Posterior cingulate gyrus (tissue), 11 donors: ENCODE measurements at regions of chr3 and their contacts with region 1.

Region 1: GRCh38 chr3:105366326-105367062 is at the start of gene ALCAM:
- DNase-seq: peak; percentile 93 to 99 (median 96)

Region 2: GRCh38 chr3:104102386-104102785 is 1264.1 kb before region 1 on chr3:
- intact Hi-C with region 1: loop called (anchors 10 kb)
- DNase-seq: no peak

Region 3: DNA sequence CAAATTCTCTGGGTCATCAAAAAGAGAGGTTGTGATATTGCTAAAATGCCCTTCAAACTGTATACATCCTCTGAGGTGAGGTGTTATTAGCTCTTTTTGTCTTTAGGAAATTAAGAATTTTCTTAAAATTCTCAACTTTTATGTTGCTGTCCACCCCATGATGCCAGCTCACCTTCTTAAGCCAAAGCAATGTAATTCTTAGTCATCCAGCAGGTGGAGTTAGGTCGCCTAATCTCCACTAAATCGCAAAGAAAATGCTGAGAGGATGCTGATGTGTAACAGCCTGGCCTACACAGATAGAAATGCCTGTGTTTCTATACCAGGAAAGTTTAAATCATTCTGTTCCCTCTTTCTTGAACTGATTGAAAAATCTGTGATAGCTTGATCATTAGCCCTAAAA is 769.9 kb before region 1 on chr3:
- intact Hi-C with region 1: loop called (anchors 2 kb)
- DNase-seq: no peak

Region 4: DNA sequence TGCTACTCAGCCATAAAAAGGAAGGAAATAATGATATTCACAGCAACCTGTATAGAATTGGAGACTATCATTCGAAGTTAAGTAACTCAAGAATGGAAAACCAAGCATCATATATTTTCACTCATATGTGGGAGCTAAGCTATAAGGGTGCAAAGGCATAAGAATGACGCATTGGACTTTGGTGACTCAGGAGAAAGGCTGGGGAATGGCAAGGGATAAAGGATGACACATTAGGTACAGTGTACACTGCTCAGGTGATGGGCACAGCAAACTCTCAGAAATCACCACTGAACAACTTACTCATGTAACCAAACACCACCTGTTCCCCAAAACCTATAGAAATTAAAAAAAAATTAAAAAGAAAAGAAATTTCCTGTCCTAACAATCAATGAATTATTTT is 42.9 kb after region 1 on chr3:
- intact Hi-C with region 1: no loop called
- DNase-seq: no peak

Region 5: DNA sequence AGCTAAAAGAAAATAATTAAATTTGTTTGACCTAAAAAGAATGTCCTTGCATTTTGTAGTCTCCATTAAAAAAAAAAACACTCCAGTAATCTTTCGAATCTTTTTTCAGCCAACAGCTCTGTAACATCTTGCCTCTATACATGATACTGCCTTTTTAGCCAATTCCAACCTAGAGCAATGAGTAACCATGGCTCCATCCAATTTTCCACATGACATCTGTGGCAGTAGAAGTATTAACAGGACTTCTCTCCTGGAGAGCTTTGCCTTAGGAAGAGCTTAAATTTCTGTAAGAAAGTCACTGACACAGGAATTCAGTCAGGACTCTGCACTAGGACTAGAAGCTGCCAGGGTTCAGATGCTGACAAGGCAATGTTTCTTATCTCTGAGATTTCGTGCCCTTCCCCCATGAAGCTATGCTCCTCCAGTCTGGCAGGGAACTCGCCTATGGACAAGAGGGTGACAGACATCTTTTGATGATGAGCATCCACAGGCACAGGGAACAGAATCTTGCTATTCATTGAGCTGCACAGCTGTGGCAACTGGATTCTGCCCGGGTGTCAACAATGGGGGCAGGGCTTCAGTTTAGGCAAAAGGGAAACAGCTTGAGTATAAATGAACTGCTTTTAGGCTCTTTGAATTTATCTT is 82.0 kb after region 1 on chr3:
- intact Hi-C with region 1: loop called (anchors 1 kb)
- DNase-seq: peak; percentile 52 to 96 (median 80)

Region 6: GRCh38 chr3:105722943-105723556 is 356.6 kb after region 1 on chr3:
- intact Hi-C with region 1: no loop called
- DNase-seq: no peak

Region 7: DNA sequence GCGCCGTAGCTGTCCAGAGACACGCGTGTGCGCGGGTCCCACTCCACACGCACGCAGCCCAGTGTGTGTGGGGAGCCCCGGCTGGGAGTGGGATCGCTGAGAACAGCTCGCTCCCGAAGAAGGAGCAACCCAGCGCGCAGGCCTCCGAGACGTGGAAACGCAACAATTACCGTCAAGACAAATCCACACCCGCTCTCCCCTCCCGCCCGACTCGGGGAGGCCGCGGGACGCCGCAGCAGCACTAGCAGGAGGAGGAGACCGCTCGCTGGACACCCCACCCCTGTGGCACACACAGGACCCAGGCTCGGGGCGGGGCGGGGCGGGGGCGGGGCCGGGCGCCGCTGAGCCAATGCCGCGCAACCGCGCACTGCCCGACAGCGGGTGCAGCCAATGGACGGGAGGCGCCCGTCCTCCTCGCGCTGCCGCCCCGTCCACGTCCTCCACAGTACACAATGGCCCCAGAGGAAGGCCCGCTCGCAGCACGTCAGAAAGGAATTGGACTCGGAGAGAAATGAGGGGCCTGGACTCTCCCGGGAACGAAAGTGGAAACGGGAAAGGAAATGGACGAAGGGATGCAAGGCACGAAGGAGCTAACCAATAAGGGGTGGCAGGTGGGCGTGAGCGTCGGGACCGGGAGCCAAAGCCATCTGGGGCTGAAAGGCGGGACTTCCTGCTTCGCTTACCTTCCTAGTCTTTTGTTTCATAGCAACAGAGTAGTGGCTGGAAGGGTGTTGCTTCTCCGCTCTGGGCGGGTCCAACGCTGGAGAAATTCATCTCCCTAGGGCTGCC is 502.4 kb after region 1 on chr3 and contains the start of gene CBLB:
- intact Hi-C with region 1: loop called (anchors 5 kb)
- DNase-seq: peak; percentile 81 to 99 (median 90)